ENCODE measurements at regions of chr3 and their contacts with region 1.

Region 1: DNA sequence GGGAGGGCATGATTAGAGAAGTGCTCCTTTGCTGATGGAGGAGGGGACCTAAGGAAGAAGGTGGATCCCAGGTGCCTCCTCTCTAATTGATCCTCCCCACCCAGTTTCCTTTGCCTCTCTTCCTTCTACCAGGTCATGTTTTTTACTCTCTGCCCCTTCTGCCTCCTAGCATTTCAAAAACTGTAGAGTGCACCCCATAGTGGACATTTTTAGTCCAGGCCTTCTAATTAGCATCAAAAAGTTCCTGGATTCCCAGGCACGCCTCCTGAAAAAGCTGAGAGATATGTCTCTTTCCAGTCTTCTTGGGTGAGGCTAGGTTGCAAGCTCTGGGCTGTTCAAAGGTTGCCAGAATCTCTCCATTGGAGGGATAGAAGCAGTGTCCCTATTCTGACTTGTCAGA is 18.7 kb upstream of the ITGB5 start:
- DNase-seq: peak; percentile 7
- ATAC-seq: no peak
- H3K4me3 ChIP-seq: no peak overlapping the region
- H3K27ac ChIP-seq: no peak overlapping the region
- H3K4me1 ChIP-seq: 0 out of 2 replicates have a peak, but pooled peaks cover 1% of the 10 kb centered on the region
- H3K27me3 ChIP-seq: no peaks in the 10 kb centered on the region
- CTCF ChIP-seq: peak; percentile 29; the same call in 1 of the 2 replicates

Region 2: DNA sequence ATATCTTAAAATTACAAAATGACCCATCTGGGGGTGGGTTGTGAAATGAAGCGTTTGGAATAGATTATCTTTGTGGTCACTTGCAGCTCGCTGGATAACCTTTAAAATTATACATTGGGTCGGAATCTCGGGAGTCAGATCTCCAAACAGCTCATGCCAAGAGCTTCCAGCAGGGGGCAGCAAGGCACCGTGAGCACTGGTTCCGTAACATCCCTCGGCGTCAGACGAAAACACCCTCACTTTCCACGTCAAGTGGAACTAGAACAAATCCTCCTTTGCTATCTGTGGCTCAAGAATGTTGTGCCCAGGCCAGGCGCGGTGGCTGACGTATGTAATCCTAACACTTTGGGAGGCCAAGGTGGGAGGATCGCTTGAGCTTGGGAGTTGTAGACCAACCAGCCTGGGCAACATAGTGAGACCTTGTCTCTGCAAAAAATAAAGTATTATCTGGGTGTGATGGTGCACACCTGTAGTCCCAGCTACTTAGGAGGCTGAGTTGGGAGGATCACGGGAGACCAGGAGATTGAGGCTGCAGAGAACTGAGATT is 144.5 kb before region 1 on chr3:
- CTCF ChIA-PET with region 1: interaction called, 10 read pairs
- POLR2A ChIA-PET with region 1: no interaction called
- intact Hi-C with region 1: loop called (anchors 1 kb)
- DNase-seq: peak; percentile 81
- ATAC-seq: peak; percentile 87
- H3K4me3 ChIP-seq: no peak overlapping the region; the same call in 1 of the 2 replicates
- H3K27ac ChIP-seq: no peak overlapping the region
- H3K4me1 ChIP-seq: no peaks in the 10 kb centered on the region
- H3K27me3 ChIP-seq: no peaks in the 10 kb centered on the region
- CTCF ChIP-seq: peak; percentile 83

Region 3: DNA sequence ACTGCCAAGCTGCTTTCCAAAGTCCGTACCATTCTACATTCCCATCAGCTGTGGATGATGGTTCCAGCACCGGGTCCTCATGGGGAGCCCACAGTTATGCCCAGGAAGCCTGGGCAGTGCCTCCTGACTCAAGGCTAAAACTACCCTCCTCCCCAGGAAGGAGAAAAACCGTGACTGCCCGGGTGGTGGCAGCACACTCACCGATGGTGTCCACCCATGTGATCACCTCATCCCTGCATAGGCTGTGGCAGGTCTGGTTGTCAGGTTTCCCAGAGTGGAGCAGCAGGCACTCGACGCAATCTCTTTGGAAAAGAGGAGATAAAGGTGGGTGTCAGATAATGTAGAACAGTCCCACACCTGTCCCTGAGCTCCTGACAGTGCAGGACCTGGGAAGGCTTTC is 137.0 kb before region 1 on chr3:
- CTCF ChIA-PET with region 1: no interaction called
- POLR2A ChIA-PET with region 1: no interaction called
- intact Hi-C with region 1: loop called (anchors 2 kb)
- DNase-seq: peak; percentile 67
- ATAC-seq: peak; percentile 93
- H3K4me3 ChIP-seq: no peak overlapping the region
- H3K27ac ChIP-seq: no peak overlapping the region
- H3K4me1 ChIP-seq: no peaks in the 10 kb centered on the region
- H3K27me3 ChIP-seq: no peaks in the 10 kb centered on the region
- CTCF ChIP-seq: peak; percentile 60

Region 4: GRCh38 chr3:124786441-124787241 is 119.2 kb before region 1 on chr3:
- CTCF ChIA-PET with region 1: interaction called, 20 read pairs
- POLR2A ChIA-PET with region 1: no interaction called
- intact Hi-C with region 1: loop called (anchors 1 kb)
- DNase-seq: peak; percentile 68
- ATAC-seq: peak; percentile 81
- H3K4me3 ChIP-seq: no peak overlapping the region
- H3K27ac ChIP-seq: peak overlapping the region; percentile 37
- H3K4me1 ChIP-seq: peaks cover 6% of the 10 kb centered on the region
- H3K27me3 ChIP-seq: no peaks in the 10 kb centered on the region
- CTCF ChIP-seq: peak; percentile 66

Region 5: DNA sequence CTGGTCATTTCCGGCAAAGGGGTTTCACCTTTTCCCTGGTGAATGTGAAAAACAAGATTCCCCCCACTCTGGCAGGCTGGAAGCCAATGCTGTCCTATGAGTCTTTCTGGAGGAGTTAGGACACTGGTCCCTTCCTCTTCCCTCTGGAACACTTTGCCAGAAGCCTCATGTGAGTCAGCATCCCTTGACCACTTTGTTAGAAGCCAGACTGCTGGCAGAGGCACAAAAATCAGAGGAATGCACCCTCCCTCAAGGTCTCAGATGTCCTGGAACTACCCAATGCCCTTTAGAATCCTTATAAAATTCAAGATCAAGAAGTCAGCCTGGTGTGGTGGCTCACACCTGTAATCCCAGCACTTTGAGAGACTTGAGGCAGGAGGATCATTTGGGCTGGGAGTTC is 45.2 kb before region 1 on chr3:
- CTCF ChIA-PET with region 1: no interaction called
- POLR2A ChIA-PET with region 1: no interaction called
- intact Hi-C with region 1: loop called (anchors 1 kb)
- DNase-seq: peak; percentile 96
- ATAC-seq: peak; percentile 98
- H3K4me3 ChIP-seq: no peak overlapping the region
- H3K27ac ChIP-seq: peak overlapping the region; percentile 42
- H3K4me1 ChIP-seq: peaks cover 20% of the 10 kb centered on the region
- H3K27me3 ChIP-seq: no peaks in the 10 kb centered on the region
- CTCF ChIP-seq: no peak